Activated CD8-positive, alpha-beta memory T cell treated with anti-CD3 and anti-CD28 coated beads, Interleukin-2, amount 10 ng/mL, durations not matched to agents 7 days and 5 days (primary cell): ENCODE measurements at regions of chr16 and their contacts with region 1.

Region 1: GRCh38 chr16:4475880-4476788 is at the start of gene HMOX2:
- DNase-seq: peak; percentile 96
- ATAC-seq: peak; percentile 82
- H3K4me3 Mint-ChIP-seq: peak within 1 kb of the TSS; percentile 92
- H3K27ac Mint-ChIP-seq: peak within 1 kb of the TSS; percentile 80
- H3K4me1 Mint-ChIP-seq: peaks cover 48% of the 10 kb centered on the region
- H3K27me3 Mint-ChIP-seq: no peaks in the 10 kb centered on the region
- total RNA-seq, gene HMOX2: 96.5 to 103 TPM

Region 2: DNA sequence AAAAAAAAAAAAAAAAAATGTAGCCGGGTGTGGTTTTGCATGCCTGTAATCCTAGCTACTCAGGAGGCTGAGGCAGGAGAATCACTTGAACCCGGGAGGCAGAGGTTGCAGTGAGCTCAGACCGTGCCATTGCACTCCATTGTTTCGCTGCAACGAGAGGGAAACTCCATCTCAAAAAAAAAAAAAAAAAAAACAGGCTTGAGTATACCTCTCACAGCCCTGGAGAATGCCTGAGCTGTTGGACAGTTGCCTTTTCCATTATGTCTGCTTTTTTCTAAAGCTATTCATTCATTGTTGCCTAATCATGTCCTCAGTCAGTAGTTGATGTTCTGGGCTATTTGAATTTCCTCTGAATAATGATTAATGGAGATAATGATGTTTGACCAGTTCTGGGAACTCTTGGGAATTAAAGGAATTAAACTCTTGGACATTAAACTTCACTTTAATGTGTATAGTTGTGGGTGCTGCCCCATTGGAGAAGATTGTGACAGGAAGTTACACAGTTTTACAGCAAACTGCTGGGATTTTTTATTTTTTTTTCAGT is 11.9 kb after region 1 on chr16:
- CTCF ChIA-PET with region 1: interaction called, 65 read pairs
- DNase-seq: no peak
- ATAC-seq: peak; percentile 60
- H3K4me3 Mint-ChIP-seq: peak overlapping the region; percentile 48
- H3K27ac Mint-ChIP-seq: peak overlapping the region; percentile 96
- H3K4me1 Mint-ChIP-seq: peaks cover 48% of the 10 kb centered on the region
- H3K27me3 Mint-ChIP-seq: no peaks in the 10 kb centered on the region

Region 3: DNA sequence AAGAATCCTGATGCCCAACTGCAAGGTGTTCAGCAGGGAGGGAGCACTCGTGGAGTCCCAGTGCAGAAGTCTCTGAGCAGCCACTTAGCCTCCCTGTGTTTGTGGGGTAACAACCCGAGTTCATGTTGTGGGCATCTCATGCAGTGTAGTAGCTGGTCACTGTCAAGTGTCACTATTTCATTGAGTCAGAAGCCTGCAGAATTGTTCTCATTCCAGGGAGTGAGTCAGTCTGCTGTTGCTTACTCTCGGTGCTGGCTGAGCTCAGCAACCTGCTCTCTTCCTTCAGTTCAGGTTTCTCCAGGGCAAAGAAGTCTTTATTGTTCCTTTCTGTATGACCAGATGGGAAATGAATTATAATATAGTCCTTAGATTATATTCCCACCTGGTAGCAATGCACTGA is 24.1 kb after region 1 on chr16:
- CTCF ChIA-PET with region 1: interaction called, 84 read pairs
- DNase-seq: no peak
- ATAC-seq: no peak
- H3K4me3 Mint-ChIP-seq: no peak overlapping the region
- H3K27ac Mint-ChIP-seq: no peak overlapping the region
- H3K4me1 Mint-ChIP-seq: peaks cover 83% of the 10 kb centered on the region
- H3K27me3 Mint-ChIP-seq: no peaks in the 10 kb centered on the region